CD8-positive, alpha-beta T cell (primary cell): ENCODE measurements at regions of chr19 and their contacts with region 1.

Region 1: GRCh38 chr19:41928221-41928683 is at the start of gene ERFL:
- DNase-seq: peak in 3 of 9 experiments; percentile 23 to 55 (median 40)
- ATAC-seq: peak; percentile 37
- H3K4me3 ChIP-seq: peak within 1 kb of the TSS; percentile 54 to 58
- H3K4me3 Mint-ChIP-seq: no peak within 1 kb of the TSS
- H3K27ac ChIP-seq: peak within 1 kb of the TSS in 1 of 2 experiments; percentile 56
- H3K27ac Mint-ChIP-seq: peak within 1 kb of the TSS; percentile 96
- H3K4me1 ChIP-seq: peaks cover 24% of the 10 kb centered on the region
- H3K4me1 Mint-ChIP-seq: peaks cover 34% of the 10 kb centered on the region
- H3K27me3 ChIP-seq: peaks cover 0 to 13% of the 10 kb centered on the region in 2 experiments
- H3K27me3 Mint-ChIP-seq: no peaks in the 10 kb centered on the region
- CTCF ChIP-seq: no peak
- total RNA-seq, gene ERFL: 5.4 to 6.8 TPM

Region 2: GRCh38 chr19:41691268-41691970 is 236.8 kb before region 1 on chr19:
- CTCF ChIA-PET with region 1: no interaction called
- POLR2A ChIA-PET with region 1: no interaction called
- intact Hi-C with region 1: no loop called
- DNase-seq: peak in 4 of 9 experiments; percentile 27 to 45 (median 43)
- ATAC-seq: no peak
- H3K4me3 ChIP-seq: no peak overlapping the region
- H3K4me3 Mint-ChIP-seq: no peak overlapping the region
- H3K27ac ChIP-seq: no peak overlapping the region
- H3K27ac Mint-ChIP-seq: no peak overlapping the region
- H3K4me1 ChIP-seq: no peaks in the 10 kb centered on the region
- H3K4me1 Mint-ChIP-seq: no peaks in the 10 kb centered on the region
- H3K27me3 ChIP-seq: peaks cover 0 to 7% of the 10 kb centered on the region in 2 experiments
- H3K27me3 Mint-ChIP-seq: peaks cover 37% of the 10 kb centered on the region
- CTCF ChIP-seq: peak; percentile 49

Region 3: GRCh38 chr19:41912899-41913537 is 15.2 kb before region 1 on chr19:
- CTCF ChIA-PET with region 1: interaction called, 4 read pairs
- POLR2A ChIA-PET with region 1: interaction called, 7 read pairs
- intact Hi-C with region 1: loop called in 1 of 2 experiments (anchors 2 kb)
- DNase-seq: peak in 3 of 9 experiments; percentile 50 to 56 (median 54)
- ATAC-seq: peak; percentile 15
- H3K4me3 ChIP-seq: no peak overlapping the region
- H3K4me3 Mint-ChIP-seq: peak overlapping the region; percentile 26
- H3K27ac ChIP-seq: no peak overlapping the region
- H3K27ac Mint-ChIP-seq: no peak overlapping the region
- H3K4me1 ChIP-seq: peaks cover 70% of the 10 kb centered on the region
- H3K4me1 Mint-ChIP-seq: peaks cover 43% of the 10 kb centered on the region
- H3K27me3 ChIP-seq: peaks cover 0 to 52% of the 10 kb centered on the region in 2 experiments
- H3K27me3 Mint-ChIP-seq: peaks cover 3% of the 10 kb centered on the region
- CTCF ChIP-seq: no peak

Region 4: DNA sequence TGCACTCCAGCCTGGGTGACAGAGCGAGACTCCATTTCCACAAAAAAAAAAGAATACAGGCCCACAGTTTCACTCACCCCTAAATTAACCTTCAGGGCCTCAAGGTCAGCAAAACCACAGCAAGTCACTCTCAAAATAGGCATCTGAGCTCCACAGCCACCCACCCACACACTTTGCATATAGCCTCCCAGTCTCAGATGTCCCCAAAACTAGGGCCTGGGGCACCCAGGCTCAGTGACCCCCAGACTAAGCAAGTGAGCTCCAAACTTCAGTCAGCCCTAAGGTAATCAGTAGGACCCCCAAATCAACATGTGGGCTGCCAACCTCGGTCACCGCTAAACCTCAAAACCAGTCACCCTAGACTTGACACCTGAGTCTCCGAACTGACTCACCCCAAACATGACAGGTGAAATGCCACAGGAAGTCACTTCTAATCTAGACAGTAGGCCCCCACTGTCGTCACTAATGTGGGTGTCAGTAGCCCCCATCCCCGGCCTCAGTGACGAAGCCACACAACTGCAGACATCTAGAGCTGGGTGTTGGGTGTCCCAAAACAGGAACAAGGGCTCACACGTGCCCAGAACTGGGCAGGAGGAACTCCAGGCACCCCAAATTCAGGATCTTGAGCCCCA is 17.0 kb after region 1 on chr19:
- CTCF ChIA-PET with region 1: interaction called, 6 read pairs
- POLR2A ChIA-PET with region 1: interaction called, 4 read pairs
- intact Hi-C with region 1: loop called in 1 of 2 experiments (anchors 2 kb)
- DNase-seq: peak; percentile 80 to 98 (median 91)
- ATAC-seq: peak; percentile 82
- H3K4me3 ChIP-seq: no peak overlapping the region
- H3K4me3 Mint-ChIP-seq: peak overlapping the region; percentile 69
- H3K27ac ChIP-seq: peak overlapping the region; percentile 62 to 66
- H3K27ac Mint-ChIP-seq: peak overlapping the region; percentile 99
- H3K4me1 ChIP-seq: peaks cover 40% of the 10 kb centered on the region
- H3K4me1 Mint-ChIP-seq: peaks cover 61% of the 10 kb centered on the region
- H3K27me3 ChIP-seq: peaks cover 0 to 4% of the 10 kb centered on the region in 2 experiments
- H3K27me3 Mint-ChIP-seq: no peaks in the 10 kb centered on the region
- CTCF ChIP-seq: no peak